Posterior vena cava (tissue), 2 donors: ENCODE measurements at regions of chr17 and their contacts with region 1.

Region 1: GRCh38 chr17:17496189-17497064 is at the start of gene RASD1:
- DNase-seq: peak; percentile 97
- total RNA-seq, gene RASD1: 7.4 to 40.3 TPM

Region 2: DNA sequence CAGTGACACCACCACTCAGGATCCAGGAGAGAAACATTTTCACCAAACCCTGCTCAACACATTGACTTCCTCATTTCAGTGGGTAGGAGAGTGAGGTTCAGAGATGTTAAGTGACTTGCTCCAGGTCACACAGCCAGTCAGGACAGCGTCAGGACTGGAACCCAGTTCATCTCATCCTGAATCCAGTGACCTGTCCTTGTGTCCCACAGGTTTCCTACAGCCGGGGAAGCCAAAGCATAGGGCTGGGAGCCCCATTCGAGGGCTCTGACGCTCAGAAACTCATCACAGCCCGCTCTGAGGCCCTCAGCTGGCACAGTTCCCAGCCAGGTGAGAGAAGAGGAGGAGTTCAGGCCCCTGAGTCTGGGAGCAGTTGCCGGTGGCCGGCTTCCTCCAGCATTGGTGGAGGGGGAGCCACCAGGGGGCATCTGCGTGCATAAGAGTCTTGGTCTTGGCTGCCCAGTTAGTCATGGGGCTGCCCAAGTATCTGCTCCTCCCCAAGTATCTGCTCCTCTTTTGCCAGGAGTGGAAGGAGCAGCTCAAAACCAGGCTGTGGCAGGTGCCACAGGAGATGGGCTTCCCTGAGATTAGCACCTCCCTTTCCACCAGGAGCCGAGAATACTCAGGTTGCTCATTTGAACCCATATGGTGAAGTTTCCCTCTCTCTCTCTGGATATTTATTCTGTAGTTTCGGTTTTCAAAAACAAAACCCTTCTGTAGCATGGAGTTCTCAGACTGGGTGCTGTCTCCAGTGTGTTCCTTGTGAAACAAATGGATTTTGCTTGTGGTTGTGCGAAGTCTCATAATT is 580.5 kb before region 1 on chr17:
- intact Hi-C with region 1: no loop called
- DNase-seq: peak; percentile 83

Region 3: DNA sequence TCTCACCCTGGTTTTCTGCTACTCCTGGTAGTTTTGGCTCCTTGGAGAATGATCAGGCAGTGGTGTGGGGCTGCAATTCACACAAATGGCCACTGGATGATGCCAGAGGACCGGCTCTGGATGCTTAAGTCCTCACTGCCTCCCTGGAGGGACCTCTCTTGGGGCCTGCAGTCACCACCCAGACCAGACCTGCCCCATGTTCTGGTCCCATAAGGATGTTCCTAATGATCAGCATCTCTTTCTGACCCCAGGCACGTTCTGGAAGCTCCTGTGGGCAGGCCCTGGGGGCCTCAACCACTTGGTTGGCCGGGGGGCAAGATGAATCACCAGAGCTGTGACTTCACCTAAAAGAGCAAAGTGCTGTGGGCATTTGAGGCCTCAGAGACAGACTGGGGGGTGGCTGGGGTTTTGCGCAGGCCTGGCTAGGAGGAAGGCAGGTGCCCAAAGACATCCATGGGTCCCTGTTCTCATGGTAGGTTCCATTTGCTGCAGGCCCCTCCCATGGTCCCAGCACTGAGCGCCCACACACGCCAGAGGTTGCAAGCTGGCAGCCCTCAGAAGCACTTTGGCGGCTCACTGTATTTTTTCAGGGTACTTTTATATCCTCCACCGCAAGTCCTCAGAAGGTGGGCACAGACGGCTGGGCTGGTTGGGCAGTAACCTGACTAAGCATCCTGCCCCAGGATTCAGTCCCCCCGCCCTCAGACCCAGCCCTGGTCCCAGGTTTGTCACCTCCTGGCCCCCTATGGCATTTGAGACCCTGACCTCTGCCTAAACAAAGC is 140.1 kb before region 1 on chr17:
- intact Hi-C with region 1: loop called in 1 of 2 experiments (anchors 10 kb)
- DNase-seq: peak; percentile 88

Region 4: DNA sequence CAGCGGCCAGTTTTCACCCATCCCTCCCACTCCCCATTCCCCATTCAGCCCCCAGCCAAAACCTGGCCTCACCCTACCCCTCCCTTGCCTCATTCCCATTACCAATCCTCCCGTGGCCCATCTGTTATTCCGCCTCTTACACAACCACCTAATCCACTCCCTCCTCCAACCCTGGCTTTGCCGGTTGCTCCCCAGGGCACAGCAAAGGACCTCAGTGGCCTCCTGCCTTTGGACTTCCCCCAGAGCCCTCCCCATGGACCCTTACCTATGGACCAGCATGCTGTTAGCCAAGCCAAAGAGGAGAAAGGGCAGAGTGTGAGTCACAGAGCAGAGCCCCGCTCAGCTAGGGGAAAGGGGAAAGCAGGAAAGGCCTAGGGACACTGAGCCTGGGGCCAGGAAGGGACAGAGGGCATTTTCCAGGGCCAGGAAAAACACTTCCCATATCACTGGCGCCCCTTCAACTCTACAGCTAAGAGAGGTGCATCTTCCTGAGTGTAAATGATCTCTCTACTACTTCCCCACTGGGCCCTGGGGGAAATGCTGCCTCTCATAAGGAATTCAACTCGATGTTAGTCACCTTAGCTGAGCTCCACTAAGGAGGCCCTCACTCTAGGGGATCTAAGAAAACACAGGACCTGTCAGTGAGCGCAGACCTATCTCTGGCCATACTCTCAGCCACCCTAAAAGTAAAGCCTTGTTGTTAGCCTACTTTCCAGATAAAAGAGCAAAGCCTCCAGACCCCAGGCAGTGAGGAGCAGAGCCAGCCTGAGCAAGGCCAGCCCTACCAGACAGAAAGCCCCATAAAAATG is 84.4 kb after region 1 on chr17:
- intact Hi-C with region 1: loop called in 1 of 2 experiments (anchors 10 kb)
- DNase-seq: no peak

Region 5: DNA sequence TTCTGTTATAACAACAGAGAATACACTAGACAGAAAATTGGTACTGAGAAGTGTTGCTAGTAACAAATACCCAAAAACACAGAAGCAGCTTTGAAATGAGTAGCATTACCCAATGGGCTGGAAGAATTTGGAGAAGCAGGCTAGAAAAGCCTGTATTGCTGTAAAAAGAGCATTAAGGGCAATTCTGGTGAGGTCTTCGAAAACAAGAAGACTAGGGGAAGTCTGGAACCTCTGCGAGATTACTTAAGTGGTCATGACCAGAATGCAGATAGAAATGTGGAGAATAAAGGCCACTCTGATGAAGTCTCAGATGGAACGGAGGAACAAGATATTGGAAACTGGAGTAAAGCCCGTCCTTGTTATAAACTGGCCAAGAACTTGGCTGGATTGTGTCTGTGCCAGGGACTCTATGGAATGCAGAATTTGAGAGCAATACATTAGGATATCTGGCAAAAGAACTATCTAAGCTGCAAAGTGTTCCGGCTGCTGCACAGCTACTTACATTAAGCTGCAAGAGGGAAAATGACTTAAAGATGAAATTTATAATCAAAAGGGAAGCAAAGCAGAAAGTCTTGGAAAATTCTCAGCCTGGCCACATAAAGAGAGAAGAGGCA is 140.0 kb after region 1 on chr17:
- intact Hi-C with region 1: loop called (anchors 10 kb)
- DNase-seq: no peak

Region 6: GRCh38 chr17:17641621-17642409 is 145.4 kb after region 1 on chr17:
- intact Hi-C with region 1: loop called (anchors 10 kb)
- DNase-seq: peak; percentile 89